Dendritic cell treated with granulocyte-macrophage colony-stimulating factor and Interleukin-4, amounts not matched to agents 40 ng/mL and 50 ng/mL, for 4 days (primary cell): ENCODE measurements at regions of chr11 and their contacts with region 1.

Region 1: GRCh38 chr11:30917859-30918478 is 331.8 kb upstream of the MPPED2 start:
- H3K4me3 Mint-ChIP-seq: no peak overlapping the region
- H3K27ac Mint-ChIP-seq: peak overlapping the region; percentile 76
- H3K4me1 Mint-ChIP-seq: peaks cover 36% of the 10 kb centered on the region
- H3K27me3 Mint-ChIP-seq: peaks cover 19% of the 10 kb centered on the region

Region 2: GRCh38 chr11:29432719-29433325 is 1485.1 kb before region 1 on chr11:
- intact Hi-C with region 1: loop called (anchors 2 kb)
- H3K4me3 Mint-ChIP-seq: no peak overlapping the region
- H3K27ac Mint-ChIP-seq: no peak overlapping the region
- H3K4me1 Mint-ChIP-seq: no peaks in the 10 kb centered on the region
- H3K27me3 Mint-ChIP-seq: no peaks in the 10 kb centered on the region

Region 3: DNA sequence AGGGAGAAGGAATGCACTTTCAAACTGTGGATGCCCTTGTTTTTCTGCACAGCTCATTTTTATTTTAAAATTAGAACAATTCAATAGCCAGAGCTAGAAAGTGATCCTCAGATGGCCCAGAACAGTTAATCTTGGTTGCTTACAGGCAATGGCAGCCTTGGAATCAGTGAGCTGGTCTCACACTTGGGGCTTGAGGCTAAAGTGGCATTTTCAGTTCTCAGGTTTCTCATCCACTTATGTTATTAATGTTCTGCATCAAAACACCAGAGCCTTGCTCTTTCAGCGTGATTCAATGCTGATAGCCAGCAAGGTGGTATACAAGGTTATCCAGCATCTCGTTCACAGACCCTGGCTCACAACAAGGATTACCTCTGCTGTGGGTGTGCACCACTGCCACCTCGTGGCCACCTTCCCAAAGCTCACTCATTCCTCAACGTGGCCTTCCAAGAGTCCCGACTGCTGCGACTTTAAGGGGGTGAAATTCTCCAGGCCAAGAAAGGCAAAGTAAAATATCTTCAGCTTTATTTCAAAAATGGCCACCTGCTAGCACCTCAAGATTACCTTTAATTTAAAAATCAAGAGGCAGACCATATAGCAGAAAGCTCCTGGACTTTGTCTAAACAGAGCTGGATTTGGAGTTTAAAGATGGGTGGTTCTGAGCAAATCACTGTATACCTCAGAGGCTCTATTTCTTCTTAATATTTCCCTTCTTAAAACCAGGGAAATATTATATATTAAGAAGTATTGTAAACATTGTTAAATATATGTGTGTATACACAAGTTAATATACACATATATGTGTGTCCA is 721.4 kb before region 1 on chr11:
- intact Hi-C with region 1: loop called (anchors 10 kb)
- H3K4me3 Mint-ChIP-seq: no peak overlapping the region
- H3K27ac Mint-ChIP-seq: no peak overlapping the region
- H3K4me1 Mint-ChIP-seq: no peaks in the 10 kb centered on the region
- H3K27me3 Mint-ChIP-seq: no peaks in the 10 kb centered on the region

Region 4: DNA sequence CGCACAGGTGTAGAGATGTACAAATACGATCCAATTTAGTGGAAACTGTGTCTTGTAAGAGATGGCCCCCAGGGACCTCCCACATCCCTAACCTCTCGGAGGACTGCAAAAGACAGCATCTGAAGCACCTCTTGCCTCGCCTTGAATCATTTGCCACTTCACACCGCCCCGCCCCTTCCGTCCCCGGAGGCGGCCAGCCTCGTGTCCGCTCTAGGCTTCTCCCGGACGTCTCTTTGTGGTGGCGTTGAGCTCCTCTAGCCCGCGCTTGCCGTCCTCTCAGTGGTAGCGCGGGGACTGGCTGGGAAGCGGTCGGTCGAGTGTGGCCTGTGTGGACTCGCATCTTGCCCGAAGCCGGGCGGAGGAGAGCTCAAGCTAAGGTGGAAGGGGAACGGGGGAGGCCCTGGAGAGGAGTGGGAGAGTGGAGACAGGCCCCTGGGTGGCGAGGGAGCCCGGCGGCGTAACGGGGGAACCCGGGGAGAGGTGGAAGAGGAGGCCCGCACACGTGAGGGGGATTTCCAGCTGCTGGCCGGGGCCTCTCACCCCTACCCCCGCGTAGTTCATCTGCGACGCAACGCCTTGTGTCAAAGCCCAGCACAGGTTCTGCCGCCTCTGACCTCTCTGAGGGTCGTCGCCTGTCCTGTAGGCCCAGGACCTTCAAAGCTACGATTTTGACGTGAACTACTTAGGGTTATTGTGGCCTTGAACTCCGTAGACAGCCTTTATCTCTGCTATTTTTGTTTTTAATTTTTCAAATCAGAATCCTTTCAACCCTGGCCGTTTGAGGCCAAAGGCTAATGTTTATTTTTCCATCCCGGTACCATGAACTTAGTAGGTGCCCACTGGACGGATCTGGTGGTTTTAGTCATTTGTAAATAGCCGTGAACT is 594.9 kb before region 1 on chr11 and contains the start of gene ARL14EP:
- intact Hi-C with region 1: loop called (anchors 5 kb)
- H3K4me3 Mint-ChIP-seq: peak within 1 kb of the TSS; percentile 87
- H3K27ac Mint-ChIP-seq: peak within 1 kb of the TSS; percentile 96
- H3K4me1 Mint-ChIP-seq: peaks cover 23% of the 10 kb centered on the region
- H3K27me3 Mint-ChIP-seq: peaks cover 9% of the 10 kb centered on the region

Region 5: DNA sequence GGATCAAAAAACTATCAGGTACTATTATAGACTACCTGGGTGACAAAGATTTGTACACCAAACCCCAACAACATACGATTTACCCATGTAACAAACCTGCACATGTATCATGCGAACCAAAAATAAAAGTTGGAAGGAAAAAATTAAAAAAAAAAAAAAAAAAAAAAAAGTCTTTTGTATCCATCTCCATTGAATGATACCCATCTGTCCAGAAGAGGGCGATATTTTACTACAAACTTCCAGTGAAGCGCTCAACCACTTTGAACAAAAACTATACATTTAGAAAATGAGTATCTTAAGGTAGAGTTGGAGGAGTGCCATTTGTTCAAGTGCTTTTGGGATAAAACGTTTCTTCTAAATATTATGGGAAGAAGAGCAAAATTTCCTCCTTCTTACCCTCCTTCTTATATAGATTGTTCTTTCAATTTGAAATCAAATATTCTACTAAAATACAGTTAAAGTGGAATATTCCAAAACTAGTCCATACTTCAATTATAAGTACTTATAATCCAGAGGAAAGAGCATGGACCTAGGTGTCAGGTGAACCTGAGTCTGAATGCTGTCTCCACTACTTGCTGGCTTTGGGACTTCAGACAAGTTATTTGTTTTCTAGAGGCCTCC is 571.8 kb before region 1 on chr11:
- intact Hi-C with region 1: loop called (anchors 1 kb)
- H3K4me3 Mint-ChIP-seq: no peak overlapping the region
- H3K27ac Mint-ChIP-seq: no peak overlapping the region
- H3K4me1 Mint-ChIP-seq: peaks cover 13% of the 10 kb centered on the region
- H3K27me3 Mint-ChIP-seq: no peaks in the 10 kb centered on the region

Region 6: GRCh38 chr11:30454132-30454531 is 463.8 kb before region 1 on chr11:
- intact Hi-C with region 1: loop called (anchors 10 kb)
- H3K4me3 Mint-ChIP-seq: no peak overlapping the region
- H3K27ac Mint-ChIP-seq: peak overlapping the region; percentile 37
- H3K4me1 Mint-ChIP-seq: peaks cover 46% of the 10 kb centered on the region
- H3K27me3 Mint-ChIP-seq: peaks cover 14% of the 10 kb centered on the region